Right ventricle myocardium superior (tissue), 1 donor: ENCODE measurements at regions of chr20 and their contacts with region 1.

Region 1: GRCh38 chr20:46883892-46884291 is 10.8 kb upstream of the EYA2 start:
- DNase-seq: no peak
- ATAC-seq: no peak

Region 2: GRCh38 chr20:46746956-46747526 is 136.9 kb before region 1 on chr20:
- intact Hi-C with region 1: no loop called
- DNase-seq: no peak
- ATAC-seq: peak; percentile 34

Region 3: DNA sequence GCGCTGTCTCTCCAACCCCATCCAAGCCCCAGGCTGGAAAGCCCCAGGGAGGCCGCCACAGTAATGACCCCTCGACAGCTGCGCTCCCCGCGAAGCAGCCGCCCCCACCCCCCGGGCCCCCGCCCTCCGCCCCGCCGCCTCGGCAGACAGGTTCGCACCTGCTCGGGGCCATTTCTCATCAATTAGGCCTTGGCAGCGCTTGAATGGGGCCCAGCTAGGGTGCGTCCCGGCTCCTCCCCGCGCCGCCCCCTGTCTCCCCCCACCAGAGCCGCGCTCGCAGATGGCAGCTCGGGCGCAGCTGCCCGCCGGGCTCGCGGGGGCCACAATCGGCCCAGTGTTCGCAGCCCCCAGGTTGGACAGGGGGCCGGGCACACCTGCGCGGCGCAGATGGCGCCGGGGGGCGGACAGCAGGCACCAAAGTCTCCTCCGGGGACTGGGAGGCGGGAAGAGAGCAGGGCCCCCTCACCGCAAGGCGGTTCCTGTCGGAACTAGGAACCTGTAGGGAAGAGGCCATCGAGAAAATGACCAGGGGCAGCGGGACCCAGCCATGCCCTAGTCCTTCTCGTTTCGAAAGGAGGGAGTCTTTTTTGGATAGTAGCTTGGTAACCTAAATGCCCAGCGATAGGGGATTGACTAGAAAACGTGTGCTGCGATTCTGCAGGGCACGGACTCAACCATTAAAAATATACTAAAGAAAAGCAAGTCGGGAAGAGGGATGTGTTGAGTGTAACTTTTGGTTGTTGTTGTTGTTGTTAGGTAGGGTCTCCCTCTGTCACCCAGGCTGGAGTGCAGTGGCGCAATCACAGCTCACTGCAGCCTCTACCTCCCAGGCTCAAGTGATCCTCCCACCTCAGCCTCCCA is 72.4 kb before region 1 on chr20:
- intact Hi-C with region 1: no loop called
- DNase-seq: no peak
- ATAC-seq: no peak

Region 4: DNA sequence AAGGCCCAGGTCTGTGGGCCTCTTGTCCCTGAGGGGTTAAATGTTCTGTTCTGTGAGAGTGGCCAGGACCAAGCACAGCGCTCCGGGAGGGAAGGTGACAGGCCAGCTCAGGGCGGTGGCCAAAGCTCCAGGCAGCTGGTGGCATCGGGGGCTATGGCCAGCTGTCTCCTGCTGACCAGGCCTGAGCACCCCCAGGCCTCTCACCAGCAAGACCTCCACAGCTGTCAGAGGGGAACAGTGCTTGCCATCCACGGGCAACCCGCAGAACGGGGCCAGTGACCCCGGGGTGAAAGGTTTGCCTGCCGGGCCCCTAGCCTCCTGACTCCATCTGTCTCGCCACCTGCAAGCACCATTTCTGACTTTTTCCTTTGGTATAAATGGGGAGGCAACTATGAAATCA is 56.7 kb after region 1 on chr20:
- intact Hi-C with region 1: loop called (anchors 5 kb)
- DNase-seq: no peak
- ATAC-seq: no peak

Region 5: GRCh38 chr20:47038566-47039560 is 155.0 kb after region 1 on chr20:
- intact Hi-C with region 1: no loop called
- DNase-seq: peak; percentile 55
- ATAC-seq: no peak